Activated naive CD4-positive, alpha-beta T cell treated with anti-CD3 and anti-CD28 coated beads, Interleukin-2, amount 10 ng/mL, durations not matched to agents 7 days and 5 days (primary cell): ENCODE measurements at regions of chr6 and their contacts with region 1.

Region 1: GRCh38 chr6:90425161-90425641 is 128.6 kb upstream of the BACH2 start:
- DNase-seq: no peak
- H3K4me3 Mint-ChIP-seq: peak overlapping the region; percentile 47
- H3K27ac Mint-ChIP-seq: peak overlapping the region; percentile 87
- H3K4me1 Mint-ChIP-seq: peaks cover 19% of the 10 kb centered on the region
- H3K27me3 Mint-ChIP-seq: no peaks in the 10 kb centered on the region

Region 2: GRCh38 chr6:90413867-90414266 is 11.3 kb before region 1 on chr6:
- CTCF ChIA-PET with region 1: interaction called, 14 read pairs
- DNase-seq: peak; percentile 84
- H3K4me3 Mint-ChIP-seq: peak overlapping the region; percentile 48
- H3K27ac Mint-ChIP-seq: peak overlapping the region; percentile 75
- H3K4me1 Mint-ChIP-seq: peaks cover 63% of the 10 kb centered on the region
- H3K27me3 Mint-ChIP-seq: peaks cover 4% of the 10 kb centered on the region

Region 3: GRCh38 chr6:90472744-90473143 is 47.5 kb after region 1 on chr6:
- CTCF ChIA-PET with region 1: interaction called, 18 read pairs
- DNase-seq: peak; percentile 71
- H3K4me3 Mint-ChIP-seq: peak overlapping the region; percentile 66
- H3K27ac Mint-ChIP-seq: peak overlapping the region; percentile 86
- H3K4me1 Mint-ChIP-seq: peaks cover 97% of the 10 kb centered on the region
- H3K27me3 Mint-ChIP-seq: no peaks in the 10 kb centered on the region